SK-N-SH (cell line): ENCODE measurements at regions of chr2 and their contacts with region 1.

Region 1: GRCh38 chr2:131682122-131682944 is 154.6 kb downstream of the CCDC74A start:
- DNase-seq: peak; percentile 90
- H3K4me3 ChIP-seq: peak overlapping the region; percentile 70 to 90
- H3K27ac ChIP-seq: peak overlapping the region; percentile 86 to 97
- H3K4me1 ChIP-seq: peaks cover 3 to 17% of the 10 kb centered on the region in 2 experiments; a peak in 3 of 4 replicates
- H3K27me3 ChIP-seq: no peaks in the 10 kb centered on the region
- CTCF ChIP-seq: peak; percentile 41
- EP300 ChIP-seq: no peak
- RAD21 ChIP-seq: no peak

Region 2: GRCh38 chr2:130819603-130820278 is 862.6 kb before region 1 on chr2:
- CTCF ChIA-PET with region 1: no interaction called
- POLR2A ChIA-PET with region 1: no interaction called
- DNase-seq: peak; percentile 81
- H3K4me3 ChIP-seq: no peak overlapping the region
- H3K27ac ChIP-seq: peak overlapping the region in 1 of 2 experiments; percentile 58; a peak in 1 of 4 replicates
- H3K4me1 ChIP-seq: peaks cover 4 to 15% of the 10 kb centered on the region in 2 experiments; a peak in 2 of 4 replicates
- H3K27me3 ChIP-seq: no peaks in the 10 kb centered on the region
- CTCF ChIP-seq: no peak
- EP300 ChIP-seq: no peak
- RAD21 ChIP-seq: no peak

Region 3: GRCh38 chr2:131801210-131801744 is 118.9 kb after region 1 on chr2:
- CTCF ChIA-PET with region 1: interaction called, 19 read pairs
- POLR2A ChIA-PET with region 1: interaction called, 4 read pairs
- DNase-seq: peak; percentile 15
- H3K4me3 ChIP-seq: peak overlapping the region in 1 of 2 experiments; percentile 21; a peak in 2 of 4 replicates
- H3K27ac ChIP-seq: no peak overlapping the region
- H3K4me1 ChIP-seq: no peaks in the 10 kb centered on the region; a peak in 1 of 4 replicates
- H3K27me3 ChIP-seq: no peaks in the 10 kb centered on the region; the same call in 1 of the 2 replicates
- CTCF ChIP-seq: no peak
- EP300 ChIP-seq: no peak
- RAD21 ChIP-seq: no peak